OCI-LY7 (cell line): ENCODE measurements at regions of chr10 and their contacts with region 1.

Region 1: DNA sequence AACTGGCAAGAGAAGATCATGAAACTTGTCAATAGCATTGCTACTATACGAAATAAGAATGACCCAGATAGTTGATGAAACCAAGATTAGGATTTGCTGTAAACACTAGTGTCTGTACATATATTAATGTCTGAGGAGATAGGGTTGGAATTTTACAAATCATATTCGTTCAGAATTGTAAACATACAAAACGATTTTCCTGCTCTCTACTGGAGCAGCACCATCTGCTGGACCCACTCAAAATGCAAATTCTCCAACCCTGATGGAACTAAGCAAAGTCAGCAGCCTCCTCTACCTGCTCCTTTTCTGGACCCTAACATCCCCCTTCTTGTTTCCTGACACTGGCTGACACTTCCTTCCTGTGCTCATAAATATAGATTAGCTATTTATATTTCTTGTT is 29.4 kb upstream of the SGMS1 start:
- DNase-seq: peak; percentile 70
- H3K4me3 ChIP-seq: peak overlapping the region; percentile 51
- H3K27ac ChIP-seq: peak overlapping the region; percentile 84
- H3K4me1 ChIP-seq: peaks cover 74% of the 10 kb centered on the region
- CTCF ChIP-seq: peak; percentile 78

Region 2: GRCh38 chr10:50362547-50363125 is 290.5 kb before region 1 on chr10:
- CTCF ChIA-PET with region 1: no interaction called
- POLR2A ChIA-PET with region 1: interaction called, 16 read pairs
- intact Hi-C with region 1: loop called (anchors 2 kb)
- DNase-seq: peak; percentile 90
- H3K4me3 ChIP-seq: peak overlapping the region; percentile 72
- H3K27ac ChIP-seq: peak overlapping the region; percentile 100
- H3K4me1 ChIP-seq: peaks cover 68% of the 10 kb centered on the region
- CTCF ChIP-seq: no peak

Region 3: DNA sequence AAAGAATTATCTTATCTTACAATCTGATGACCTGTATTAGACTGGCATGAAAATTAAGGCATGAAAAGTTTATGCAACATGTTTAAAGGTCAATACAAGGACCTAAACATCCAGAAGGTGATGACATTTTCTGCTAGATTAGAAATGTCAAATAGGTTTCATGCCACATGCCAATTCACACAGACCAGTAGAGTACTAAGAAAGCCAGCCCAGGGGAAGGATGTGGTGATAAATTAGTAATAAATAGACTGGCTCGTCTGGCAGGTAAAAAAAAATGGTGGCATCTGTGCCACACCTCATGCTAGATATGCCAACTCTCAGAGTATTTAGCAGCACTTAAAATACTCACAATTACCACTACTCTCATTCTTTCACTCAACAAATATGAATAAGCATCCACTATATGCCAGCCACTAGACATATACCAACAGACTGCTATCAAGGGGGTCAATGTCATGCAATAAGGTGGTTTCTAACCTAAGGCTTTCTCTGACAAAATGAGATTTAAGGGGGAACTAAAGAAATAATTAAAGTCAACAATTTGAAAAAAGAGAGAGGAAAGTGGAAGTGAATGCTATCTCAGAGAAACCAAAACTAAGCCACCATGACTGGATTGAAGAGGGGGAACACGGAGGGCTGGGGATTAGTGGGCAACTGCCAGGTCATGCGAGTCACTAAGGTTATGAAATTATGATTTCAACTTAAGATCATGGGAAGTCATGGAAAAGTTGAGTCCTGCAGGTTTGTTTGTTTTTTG is 112.9 kb before region 1 on chr10:
- CTCF ChIA-PET with region 1: no interaction called
- POLR2A ChIA-PET with region 1: no interaction called
- intact Hi-C with region 1: no loop called
- DNase-seq: no peak
- H3K4me3 ChIP-seq: no peak overlapping the region
- H3K27ac ChIP-seq: no peak overlapping the region
- H3K4me1 ChIP-seq: no peaks in the 10 kb centered on the region
- CTCF ChIP-seq: no peak

Region 4: DNA sequence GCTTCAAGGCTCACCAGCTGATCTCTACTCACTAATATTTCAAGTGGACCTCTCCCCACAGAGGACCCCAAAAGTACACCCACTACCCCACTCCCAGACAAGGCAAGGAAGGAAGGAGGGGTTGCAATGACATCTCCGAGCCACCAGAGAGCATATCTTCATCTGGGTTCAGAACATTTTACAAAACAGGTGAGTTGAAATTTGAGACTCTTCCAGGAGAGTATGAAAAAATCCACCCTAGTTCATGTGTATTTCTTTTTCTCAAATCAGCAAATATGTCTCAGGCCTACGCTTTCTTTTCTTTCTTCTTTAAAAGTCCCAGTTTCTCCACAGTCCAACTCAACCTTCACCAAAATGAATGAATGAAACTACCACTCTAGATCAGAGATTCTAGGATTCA is 91.3 kb before region 1 on chr10:
- CTCF ChIA-PET with region 1: no interaction called
- POLR2A ChIA-PET with region 1: interaction called, 5 read pairs
- intact Hi-C with region 1: loop called (anchors 1 kb)
- DNase-seq: peak; percentile 54
- H3K4me3 ChIP-seq: no peak overlapping the region
- H3K27ac ChIP-seq: no peak overlapping the region
- H3K4me1 ChIP-seq: peaks cover 11% of the 10 kb centered on the region
- CTCF ChIP-seq: peak; percentile 94

Region 5: GRCh38 chr10:50636618-50637579 is 16.2 kb before region 1 on chr10:
- CTCF ChIA-PET with region 1: interaction called, 5 read pairs
- POLR2A ChIA-PET with region 1: interaction called, 49 read pairs
- intact Hi-C with region 1: no loop called
- DNase-seq: no peak
- H3K4me3 ChIP-seq: no peak overlapping the region
- H3K27ac ChIP-seq: no peak overlapping the region
- H3K4me1 ChIP-seq: peaks cover 13% of the 10 kb centered on the region
- CTCF ChIP-seq: no peak